Mammary epithelial cell (primary cell): ENCODE measurements at regions of chr14 and their contacts with region 1.

Region 1: DNA sequence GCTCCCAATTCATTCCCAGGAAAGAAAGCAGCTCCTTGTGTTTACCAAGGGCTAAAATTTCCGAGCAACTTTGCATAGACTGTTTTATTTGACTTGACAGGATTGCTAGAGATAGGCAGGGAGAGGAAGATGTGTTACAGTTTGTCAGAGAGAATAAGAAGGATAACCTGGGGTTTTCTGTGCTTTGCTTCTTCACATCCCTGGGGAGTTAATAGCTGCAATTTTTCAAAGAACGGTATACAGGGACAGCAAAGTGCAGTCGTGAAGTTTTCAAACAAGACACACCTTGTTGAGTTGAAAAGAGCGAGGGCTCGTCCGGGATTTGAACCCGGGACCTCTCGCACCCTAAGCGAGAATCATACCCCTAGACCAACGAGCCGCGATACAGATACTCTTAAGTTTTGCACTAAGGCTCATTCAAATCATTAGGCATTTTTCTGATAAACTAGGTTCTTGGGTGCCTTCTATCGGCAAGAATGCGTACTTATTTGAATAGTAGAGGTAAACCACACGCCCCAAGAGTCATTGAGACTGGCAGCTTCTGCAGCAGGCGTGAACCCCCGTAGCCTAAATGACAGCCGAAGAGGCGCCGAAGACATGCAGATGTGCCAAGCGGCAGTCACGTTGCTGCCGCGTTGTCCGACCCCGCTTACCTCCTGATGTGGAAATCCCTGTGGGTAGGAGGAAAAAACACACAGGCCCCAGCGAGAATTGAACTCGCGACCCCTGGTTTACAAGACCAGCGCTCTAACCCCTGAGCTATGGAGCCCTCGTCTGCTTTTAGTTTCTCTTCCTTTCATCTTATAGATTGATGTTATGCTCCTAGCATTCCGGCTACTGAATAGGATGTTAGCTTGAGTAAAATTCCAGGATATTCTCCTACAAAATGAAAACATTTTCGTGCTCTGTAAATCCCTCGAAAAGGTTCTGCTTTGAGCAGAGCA is 22.2 kb upstream of the RNASE12 start:
- DNase-seq: peak; percentile 97
- H3K4me3 ChIP-seq: peak overlapping the region; percentile 50 to 69 (median 67)
- H3K27ac ChIP-seq: peak overlapping the region; percentile 73
- H3K4me1 ChIP-seq: peaks cover 14% of the 10 kb centered on the region
- H3K27me3 ChIP-seq: no peaks in the 10 kb centered on the region
- CTCF ChIP-seq: peak; percentile 75 to 81

Region 2: GRCh38 chr14:20332788-20333493 is 280.4 kb before region 1 on chr14 and contains the start of gene CCNB1IP1:
- CTCF ChIA-PET with region 1: no interaction called
- dilution Hi-C with region 1: no loop called
- in situ Hi-C with region 1: loop called (anchors 5 to 10 kb)
- intact Hi-C with region 1: loop called (anchors 1 kb)
- DNase-seq: peak; percentile 89
- H3K4me3 ChIP-seq: peak within 1 kb of the TSS; percentile 59 to 68 (median 64)
- H3K27ac ChIP-seq: peak within 1 kb of the TSS; percentile 80
- H3K4me1 ChIP-seq: peaks cover 12% of the 10 kb centered on the region
- H3K27me3 ChIP-seq: no peaks in the 10 kb centered on the region
- CTCF ChIP-seq: no peak
- total RNA-seq, gene CCNB1IP1: 51.2 to 55.4 TPM

Region 3: DNA sequence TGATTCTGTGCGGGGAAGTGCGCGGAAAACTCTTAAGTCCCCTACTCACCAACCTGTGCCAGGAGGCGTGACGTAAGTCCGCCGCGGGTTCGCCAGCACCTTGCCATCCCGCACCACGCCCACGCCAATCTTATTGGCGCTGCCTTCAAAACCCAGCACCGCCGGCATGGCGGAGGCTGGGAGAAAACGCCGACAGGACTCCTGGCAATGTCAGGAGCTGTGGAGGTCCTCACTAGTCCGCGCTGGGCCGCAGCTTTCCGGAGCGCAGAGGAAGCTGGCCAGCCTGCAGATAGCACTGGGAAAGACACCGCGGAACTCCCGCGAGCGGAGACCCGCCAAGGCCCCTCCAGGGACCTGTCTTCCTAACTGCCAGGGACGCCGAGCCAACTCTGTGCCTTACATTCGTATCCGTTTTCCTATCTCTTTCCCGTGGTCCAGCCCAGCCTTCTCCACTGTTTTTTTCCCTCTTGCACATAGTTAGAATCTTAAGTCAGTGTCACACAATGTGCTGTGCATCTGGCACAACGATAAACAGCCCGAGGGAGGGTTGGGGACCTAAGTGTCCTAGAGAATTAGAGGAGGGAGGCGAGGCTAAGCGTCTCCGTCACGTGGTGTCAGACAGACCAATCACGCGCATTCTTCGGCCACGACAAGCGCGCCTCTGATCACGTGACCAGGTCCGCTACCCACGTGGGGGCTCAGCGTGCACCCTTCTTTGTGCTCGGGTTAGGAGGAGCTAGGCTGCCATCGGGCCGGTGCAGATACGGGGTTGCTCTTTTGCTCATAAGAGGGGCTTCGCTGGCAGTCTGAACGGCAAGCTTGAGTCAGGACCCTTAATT is 158.6 kb before region 1 on chr14 and contains the starts of genes APEX1 and OSGEP:
- CTCF ChIA-PET with region 1: no interaction called
- dilution Hi-C with region 1: no loop called
- in situ Hi-C with region 1: loop called in 1 of 2 experiments (anchors 25 kb)
- intact Hi-C with region 1: loop called (anchors 1 kb)
- DNase-seq: peak; percentile 98
- H3K4me3 ChIP-seq: peak within 1 kb of the TSS; percentile 94 to 97 (median 97)
- H3K27ac ChIP-seq: peak within 1 kb of the TSS; percentile 94
- H3K4me1 ChIP-seq: peaks cover 9% of the 10 kb centered on the region
- H3K27me3 ChIP-seq: no peaks in the 10 kb centered on the region
- CTCF ChIP-seq: no peak
- total RNA-seq, gene APEX1: 96.4 to 128 TPM
- total RNA-seq, gene OSGEP: 22.6 to 34.8 TPM

Region 4: GRCh38 chr14:20601482-20602080 is 11.8 kb before region 1 on chr14:
- CTCF ChIA-PET with region 1: no interaction called
- dilution Hi-C with region 1: no loop called
- in situ Hi-C with region 1: no loop called
- intact Hi-C with region 1: no loop called
- DNase-seq: no peak
- H3K4me3 ChIP-seq: no peak overlapping the region
- H3K27ac ChIP-seq: no peak overlapping the region
- H3K4me1 ChIP-seq: no peaks in the 10 kb centered on the region
- H3K27me3 ChIP-seq: no peaks in the 10 kb centered on the region
- CTCF ChIP-seq: no peak

Region 5: DNA sequence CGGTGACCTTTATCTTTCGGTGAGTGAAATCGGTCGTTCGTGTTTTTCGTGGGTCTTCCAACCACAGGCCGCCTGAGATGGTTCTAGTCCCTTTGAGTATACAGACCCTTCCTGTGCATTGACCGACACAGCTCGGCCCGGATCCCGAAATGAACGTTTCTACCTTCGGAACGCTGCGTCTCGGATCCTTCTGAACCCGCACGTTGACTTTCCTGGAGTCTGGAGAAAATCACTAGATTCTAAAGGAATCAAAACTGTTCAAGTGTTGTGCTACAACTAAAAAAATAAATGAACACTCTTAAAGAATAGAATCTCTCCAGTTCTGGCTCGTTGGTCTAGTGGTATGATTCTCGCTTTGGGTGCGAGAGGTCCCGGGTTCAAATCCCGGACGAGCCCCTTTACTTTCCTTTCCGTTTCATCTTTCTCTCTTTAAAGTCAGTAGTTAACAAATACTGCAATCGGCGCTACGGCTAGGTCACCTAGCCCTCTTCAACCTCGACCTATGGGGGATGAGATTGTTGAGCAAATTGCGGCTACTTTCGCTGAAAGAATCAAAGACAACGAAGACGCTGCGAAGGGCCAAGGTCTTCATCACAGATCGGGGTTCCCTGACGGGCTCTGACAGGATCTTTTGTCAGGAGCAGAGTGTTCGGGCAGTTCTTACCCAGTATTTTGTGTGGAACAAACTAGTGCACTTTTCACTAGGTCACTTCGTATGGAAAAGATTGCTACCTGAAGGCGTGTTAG is 19.5 kb after region 1 on chr14:
- CTCF ChIA-PET with region 1: interaction called, 5 read pairs
- dilution Hi-C with region 1: no loop called
- in situ Hi-C with region 1: no loop called
- intact Hi-C with region 1: loop called (anchors 1 kb)
- DNase-seq: peak; percentile 85
- H3K4me3 ChIP-seq: peak overlapping the region; percentile 11 to 55 (median 55)
- H3K27ac ChIP-seq: no peak overlapping the region
- H3K4me1 ChIP-seq: peaks cover 18% of the 10 kb centered on the region
- H3K27me3 ChIP-seq: no peaks in the 10 kb centered on the region
- CTCF ChIP-seq: no peak

Region 6: GRCh38 chr14:20682435-20683124 is 69.2 kb after region 1 on chr14:
- CTCF ChIA-PET with region 1: interaction called, 5 read pairs
- dilution Hi-C with region 1: no loop called
- in situ Hi-C with region 1: loop called in 1 of 2 experiments (anchors 5 kb)
- intact Hi-C with region 1: loop called (anchors 1 kb)
- DNase-seq: peak; percentile 87
- H3K4me3 ChIP-seq: peak overlapping the region; percentile 87 to 91 (median 89)
- H3K27ac ChIP-seq: peak overlapping the region; percentile 92
- H3K4me1 ChIP-seq: peaks cover 22% of the 10 kb centered on the region
- H3K27me3 ChIP-seq: no peaks in the 10 kb centered on the region
- CTCF ChIP-seq: peak in 1 of 2 donors; percentile 31

Region 7: GRCh38 chr14:20970983-20971704 is 357.8 kb after region 1 on chr14:
- CTCF ChIA-PET with region 1: no interaction called
- dilution Hi-C with region 1: no loop called
- in situ Hi-C with region 1: no loop called
- intact Hi-C with region 1: loop called (anchors 5 kb)
- DNase-seq: peak; percentile 74
- H3K4me3 ChIP-seq: peak overlapping the region; percentile 56 to 65 (median 61)
- H3K27ac ChIP-seq: peak overlapping the region; percentile 41
- H3K4me1 ChIP-seq: peaks cover 21% of the 10 kb centered on the region
- H3K27me3 ChIP-seq: no peaks in the 10 kb centered on the region
- CTCF ChIP-seq: peak; percentile 94 to 99